Vagina (tissue), 2 donors: ENCODE measurements at regions of chr12 and their contacts with region 1.

Region 1: GRCh38 chr12:56224102-56224701 is at the start of gene NABP2:
- DNase-seq: peak in 1 of 2 donors; percentile 98
- H3K4me3 ChIP-seq: peak within 1 kb of the TSS; percentile 59 to 69
- H3K27ac ChIP-seq: peak within 1 kb of the TSS; percentile 95
- H3K4me1 ChIP-seq: peaks cover 49% of the 10 kb centered on the region
- H3K27me3 ChIP-seq: no peaks in the 10 kb centered on the region
- CTCF ChIP-seq: peak; percentile 92 to 93 (median 93)
- POLR2A ChIP-seq: no peak
- total RNA-seq, gene NABP2: 20.4 TPM

Region 2: GRCh38 chr12:56127888-56128669 is 96.1 kb before region 1 on chr12 and contains the start of gene ESYT1:
- intact Hi-C with region 1: loop called (anchors 10 kb)
- DNase-seq: peak; percentile 100
- H3K4me3 ChIP-seq: peak within 1 kb of the TSS; percentile 75 to 86
- H3K27ac ChIP-seq: peak within 1 kb of the TSS; percentile 95
- H3K4me1 ChIP-seq: peaks cover 35% of the 10 kb centered on the region
- H3K27me3 ChIP-seq: no peaks in the 10 kb centered on the region
- CTCF ChIP-seq: no peak
- POLR2A ChIP-seq: peak; percentile 76 to 98
- total RNA-seq, gene ESYT1: 140 TPM

Region 3: GRCh38 chr12:56189176-56189917 is 34.9 kb before region 1 on chr12 and contains the start of gene SMARCC2:
- intact Hi-C with region 1: loop called (anchors 2 kb)
- DNase-seq: peak in 1 of 2 donors; percentile 93
- H3K4me3 ChIP-seq: peak within 1 kb of the TSS; percentile 80 to 93
- H3K27ac ChIP-seq: peak within 1 kb of the TSS; percentile 94
- H3K4me1 ChIP-seq: peaks cover 28% of the 10 kb centered on the region
- H3K27me3 ChIP-seq: no peaks in the 10 kb centered on the region
- CTCF ChIP-seq: peak in 2 of 3 experiments; percentile 5 to 58
- POLR2A ChIP-seq: no peak
- total RNA-seq, gene SMARCC2: 95.3 TPM